ENCODE measurements at regions of chr6 and their contacts with region 1.

Region 1: DNA sequence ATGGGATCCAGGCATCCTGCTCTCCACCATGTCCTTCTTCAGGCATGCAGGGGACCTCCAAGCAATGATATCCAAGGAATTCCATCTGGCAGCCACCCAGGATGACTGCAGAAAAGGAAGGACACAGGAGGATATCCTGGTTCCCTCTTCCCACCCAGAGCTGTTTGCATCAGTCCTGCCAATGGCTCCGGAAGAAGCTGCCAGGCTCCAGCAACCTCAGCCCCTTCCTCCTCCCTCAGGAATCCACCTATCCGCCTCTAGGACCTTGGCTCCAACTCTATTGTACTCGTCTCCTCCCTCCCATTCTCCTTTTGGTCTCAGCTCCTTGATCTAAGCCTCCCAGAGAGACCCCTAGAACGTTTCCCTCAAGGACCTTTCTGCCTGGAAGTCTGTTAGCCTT is 733 bp upstream of the PSORS1C2 start:
- DNase-seq: no peak
- H3K4me3 ChIP-seq: no peak overlapping the region
- H3K4me3 Mint-ChIP-seq: no peak overlapping the region
- H3K27ac ChIP-seq: no peak overlapping the region
- H3K27ac Mint-ChIP-seq: peak overlapping the region in 1 of 8 donors; percentile 41
- H3K4me1 ChIP-seq: peaks cover 5% of the 10 kb centered on the region
- H3K4me1 Mint-ChIP-seq: peaks cover 4 to 6% (median 5%) of the 10 kb centered on the region in 3 donors
- H3K27me3 ChIP-seq: no peaks in the 10 kb centered on the region
- H3K27me3 Mint-ChIP-seq: no peaks in the 10 kb centered on the region

Region 2: GRCh38 chr6:31128093-31128676 is 11.4 kb before region 1 on chr6:
- CTCF ChIA-PET with region 1: interaction called, 10 read pairs
- POLR2A ChIA-PET with region 1: no interaction called
- DNase-seq: peak; percentile 42 to 79 (median 62)
- H3K4me3 ChIP-seq: no peak overlapping the region
- H3K4me3 Mint-ChIP-seq: no peak overlapping the region
- H3K27ac ChIP-seq: no peak overlapping the region
- H3K27ac Mint-ChIP-seq: peak overlapping the region in 3 of 8 donors; percentile 35 to 80 (median 48)
- H3K4me1 ChIP-seq: no peaks in the 10 kb centered on the region
- H3K4me1 Mint-ChIP-seq: peaks cover 6 to 7% (median 6%) of the 10 kb centered on the region in 3 donors
- H3K27me3 ChIP-seq: peaks cover 4% of the 10 kb centered on the region
- H3K27me3 Mint-ChIP-seq: peaks cover 5 to 9% of the 10 kb centered on the region in 2 donors